ENCODE measurements at regions of chrX and their contacts with region 1.

Region 1: DNA sequence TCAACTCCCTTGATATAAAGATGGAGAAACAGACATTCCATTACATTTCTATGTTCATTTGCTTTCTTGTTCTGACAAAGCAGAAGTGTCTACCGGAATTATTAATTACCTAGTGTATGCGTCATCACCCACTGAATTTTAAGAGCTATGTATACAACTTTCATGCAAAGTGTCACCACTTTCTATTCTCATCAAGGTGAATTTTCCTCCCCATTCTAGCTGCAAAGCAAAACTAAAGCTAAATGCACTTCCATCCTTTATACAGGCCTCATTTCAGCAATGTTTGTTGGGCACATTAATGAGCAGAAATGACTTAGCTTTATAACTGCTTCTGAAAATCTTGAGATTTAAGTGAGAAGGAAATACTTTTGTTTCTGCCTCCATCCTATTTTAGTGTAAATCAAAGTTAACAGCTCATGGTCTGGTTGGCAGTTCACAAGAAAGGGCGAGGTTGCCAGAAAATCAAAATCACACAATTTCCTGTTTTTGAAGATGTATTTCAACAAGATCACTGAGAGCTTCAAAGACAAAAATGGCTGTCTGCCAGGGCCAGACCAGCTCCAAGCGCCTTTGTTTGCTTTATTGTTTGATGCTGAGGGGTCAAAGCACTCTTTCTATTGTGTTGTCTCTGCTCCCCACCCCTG is 7.2 kb upstream of the FAM9C start:
- DNase-seq: peak; percentile 43
- H3K4me3 Mint-ChIP-seq: peak overlapping the region; percentile 36
- H3K27ac Mint-ChIP-seq: peak overlapping the region; percentile 95
- H3K4me1 Mint-ChIP-seq: peaks cover 77% of the 10 kb centered on the region
- H3K27me3 Mint-ChIP-seq: no peaks in the 10 kb centered on the region

Region 2: DNA sequence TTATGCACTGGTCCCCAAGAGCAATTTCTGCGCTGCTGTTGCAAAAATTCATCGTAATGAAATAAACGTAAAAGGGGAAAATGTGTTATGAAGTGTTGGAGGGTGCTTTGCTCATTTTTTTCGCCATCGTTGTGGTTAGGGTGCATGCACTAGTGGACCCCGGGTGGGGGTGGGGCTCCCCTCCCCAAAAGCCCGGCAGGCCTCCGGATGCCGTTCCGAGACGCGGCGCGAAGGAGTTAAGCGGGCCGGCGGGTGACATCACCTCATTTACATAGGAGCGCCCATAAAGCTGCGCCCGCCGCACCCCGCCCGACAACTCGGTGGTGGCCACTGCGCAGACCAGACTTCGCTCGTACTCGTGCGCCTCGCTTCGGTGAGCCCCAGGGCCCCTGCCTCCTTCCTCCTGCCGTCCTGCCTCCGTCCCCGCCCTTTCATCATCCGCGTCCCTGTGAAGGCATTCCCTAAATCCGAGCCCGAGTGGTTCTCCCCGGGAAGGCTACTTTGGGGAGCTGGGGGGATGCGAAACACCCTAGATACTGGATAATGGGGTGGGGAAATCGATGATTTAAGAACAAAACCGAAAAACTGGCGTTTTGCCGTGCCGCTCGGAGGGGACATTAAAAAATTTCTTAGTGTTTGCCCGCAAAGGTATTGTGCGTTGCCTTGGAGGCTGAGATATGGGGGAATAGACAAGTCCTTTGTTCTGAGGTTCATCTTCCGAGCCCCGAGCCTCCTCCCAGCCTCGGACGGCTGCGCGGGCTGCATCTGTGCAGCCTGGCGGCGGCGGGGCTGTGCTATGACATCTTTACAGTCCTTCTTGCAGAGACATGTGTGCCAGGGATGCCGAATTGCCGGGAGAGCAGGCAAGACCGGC is 76.6 kb before region 1 on chrX and contains the start of gene TMSB4X:
- CTCF ChIA-PET with region 1: interaction called, 3 read pairs
- intact Hi-C with region 1: loop called (anchors 1 kb)
- DNase-seq: peak; percentile 84
- H3K4me3 Mint-ChIP-seq: peak within 1 kb of the TSS; percentile 82
- H3K27ac Mint-ChIP-seq: peak within 1 kb of the TSS; percentile 96
- H3K4me1 Mint-ChIP-seq: peaks cover 18% of the 10 kb centered on the region
- H3K27me3 Mint-ChIP-seq: no peaks in the 10 kb centered on the region
- total RNA-seq, gene TMSB4X: 5,535 to 5,691 TPM

Region 3: GRCh38 chrX:13000301-13000811 is 51.3 kb before region 1 on chrX:
- CTCF ChIA-PET with region 1: interaction called, 4 read pairs
- intact Hi-C with region 1: loop called (anchors 1 kb)
- DNase-seq: peak; percentile 69
- H3K4me3 Mint-ChIP-seq: peak overlapping the region; percentile 65
- H3K27ac Mint-ChIP-seq: peak overlapping the region; percentile 92
- H3K4me1 Mint-ChIP-seq: peaks cover 67% of the 10 kb centered on the region
- H3K27me3 Mint-ChIP-seq: no peaks in the 10 kb centered on the region

Region 4: GRCh38 chrX:13029831-13030771 is 21.6 kb before region 1 on chrX:
- CTCF ChIA-PET with region 1: interaction called, 4 read pairs
- intact Hi-C with region 1: loop called (anchors 1 kb)
- DNase-seq: no peak
- H3K4me3 Mint-ChIP-seq: peak overlapping the region; percentile 52
- H3K27ac Mint-ChIP-seq: peak overlapping the region; percentile 77
- H3K4me1 Mint-ChIP-seq: peaks cover 65% of the 10 kb centered on the region
- H3K27me3 Mint-ChIP-seq: no peaks in the 10 kb centered on the region

Measured in activated naive CD4-positive, alpha-beta T cell treated with anti-CD3 and anti-CD28 coated beads for 36 hours (primary cell).